ENCODE measurements at regions of chr19 and their contacts with region 1.

Region 1: DNA sequence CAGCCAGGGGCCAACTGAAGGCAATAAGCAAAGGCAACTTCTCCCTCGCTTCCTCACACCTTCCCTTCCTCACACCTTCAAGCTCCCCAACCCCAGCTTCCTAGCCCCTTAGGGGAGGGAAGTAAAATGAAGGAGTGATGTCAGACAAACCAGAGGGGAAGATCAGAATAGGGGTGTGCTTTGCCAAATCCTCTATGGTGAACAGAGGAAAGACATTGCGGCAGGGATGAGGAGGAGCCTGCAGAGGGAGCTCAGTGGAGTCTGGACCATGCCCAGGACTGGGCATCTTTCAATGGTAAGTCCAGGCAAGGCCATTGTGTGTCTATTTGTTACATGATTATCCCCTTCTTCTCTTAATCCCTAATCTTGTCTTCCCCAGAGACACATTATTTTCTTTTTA is 164.0 kb downstream of the TSHZ3 start:
- DNase-seq: no peak
- H3K4me3 Mint-ChIP-seq: no peak overlapping the region
- H3K27ac Mint-ChIP-seq: no peak overlapping the region
- H3K4me1 Mint-ChIP-seq: no peaks in the 10 kb centered on the region
- H3K27me3 Mint-ChIP-seq: peaks cover 19% of the 10 kb centered on the region

Region 2: GRCh38 chr19:31071136-31071855 is 114.0 kb before region 1 on chr19:
- intact Hi-C with region 1: loop called (anchors 10 kb)
- DNase-seq: no peak
- H3K4me3 Mint-ChIP-seq: no peak overlapping the region
- H3K27ac Mint-ChIP-seq: no peak overlapping the region
- H3K4me1 Mint-ChIP-seq: no peaks in the 10 kb centered on the region
- H3K27me3 Mint-ChIP-seq: peaks cover 21% of the 10 kb centered on the region

Region 3: GRCh38 chr19:31220541-31220940 is 35.3 kb after region 1 on chr19:
- intact Hi-C with region 1: no loop called
- DNase-seq: peak; percentile 21
- H3K4me3 Mint-ChIP-seq: no peak overlapping the region
- H3K27ac Mint-ChIP-seq: no peak overlapping the region
- H3K4me1 Mint-ChIP-seq: peaks cover 18% of the 10 kb centered on the region
- H3K27me3 Mint-ChIP-seq: no peaks in the 10 kb centered on the region

Region 4: DNA sequence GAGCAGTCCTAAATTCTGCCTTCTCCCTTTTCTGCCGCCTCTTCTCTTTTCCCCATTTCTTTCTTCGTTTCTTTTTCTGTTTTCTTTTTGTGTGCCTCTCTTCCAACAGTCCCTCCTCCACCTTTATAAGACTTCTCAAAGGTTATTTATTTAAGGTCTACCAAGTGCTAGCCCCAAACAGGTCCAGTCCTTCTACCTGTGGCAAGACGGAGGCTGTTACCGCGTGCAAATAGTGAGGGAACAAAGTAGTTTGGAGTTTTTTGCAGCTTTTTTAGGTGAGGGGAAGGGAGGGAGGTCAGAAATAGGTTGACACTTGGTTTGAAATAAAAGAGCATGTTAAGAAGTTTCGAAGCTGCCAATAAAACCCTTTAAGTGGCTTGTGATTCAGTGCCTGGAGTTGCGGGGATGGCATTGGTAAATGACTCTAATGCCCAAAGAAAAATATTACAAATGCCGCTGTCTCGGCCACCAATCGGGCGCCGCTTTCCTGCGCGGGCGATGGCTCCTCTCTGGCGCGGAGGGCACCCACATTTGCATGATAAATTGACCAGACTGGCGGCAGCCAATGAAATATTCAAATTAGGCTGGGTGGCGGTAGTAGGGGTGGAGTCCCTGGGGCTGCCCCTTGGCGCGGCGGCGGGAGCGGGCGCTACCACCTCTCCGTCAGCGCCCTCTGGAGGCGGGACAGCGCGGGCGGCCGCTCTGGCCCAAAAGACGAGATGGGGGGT is 171.5 kb after region 1 on chr19:
- intact Hi-C with region 1: no loop called
- DNase-seq: peak; percentile 45
- H3K4me3 Mint-ChIP-seq: no peak overlapping the region
- H3K27ac Mint-ChIP-seq: peak overlapping the region; percentile 48
- H3K4me1 Mint-ChIP-seq: peaks cover 33% of the 10 kb centered on the region
- H3K27me3 Mint-ChIP-seq: peaks cover 65% of the 10 kb centered on the region

Measured in activated T-helper 1 cell treated with anti-CD3 and anti-CD28 coated beads, Interleukin-12 subunit alpha, Interleukin-12 subunit beta, Interleukin-2, Interleukin-4 antibody, amounts not matched to agents 30 ng/mL and 10 ng/mL and 1 ng/mL, durations not matched to agents 14 hours and 24 hours and 36 hours (primary cell).